WTC11 (cell line): ENCODE measurements at regions of chr1 and their contacts with region 1.

Region 1: GRCh38 chr1:28914228-28915030 is at the start of gene EPB41:
- DNase-seq: peak; percentile 97
- ATAC-seq: peak; percentile 96
- H3K4me3 Mint-ChIP-seq: peak within 1 kb of the TSS; percentile 97
- H3K27ac Mint-ChIP-seq: peak within 1 kb of the TSS; percentile 97
- H3K4me1 Mint-ChIP-seq: peaks cover 26% of the 10 kb centered on the region
- H3K27me3 Mint-ChIP-seq: no peaks in the 10 kb centered on the region
- CTCF ChIP-seq: no peak
- total RNA-seq, gene EPB41: 80.6 to 85.0 TPM (median 81.2 TPM) in 3 replicates

Region 2: GRCh38 chr1:28983509-28984310 is 69.3 kb after region 1 on chr1:
- CTCF ChIA-PET with region 1: interaction called, 17 read pairs
- POLR2A ChIA-PET with region 1: interaction called, 5 read pairs
- DNase-seq: peak; percentile 47
- ATAC-seq: peak; percentile 91
- H3K4me3 Mint-ChIP-seq: peak overlapping the region; percentile 23
- H3K27ac Mint-ChIP-seq: peak overlapping the region; percentile 91
- H3K4me1 Mint-ChIP-seq: peaks cover 39% of the 10 kb centered on the region
- H3K27me3 Mint-ChIP-seq: no peaks in the 10 kb centered on the region
- CTCF ChIP-seq: no peak

Region 3: DNA sequence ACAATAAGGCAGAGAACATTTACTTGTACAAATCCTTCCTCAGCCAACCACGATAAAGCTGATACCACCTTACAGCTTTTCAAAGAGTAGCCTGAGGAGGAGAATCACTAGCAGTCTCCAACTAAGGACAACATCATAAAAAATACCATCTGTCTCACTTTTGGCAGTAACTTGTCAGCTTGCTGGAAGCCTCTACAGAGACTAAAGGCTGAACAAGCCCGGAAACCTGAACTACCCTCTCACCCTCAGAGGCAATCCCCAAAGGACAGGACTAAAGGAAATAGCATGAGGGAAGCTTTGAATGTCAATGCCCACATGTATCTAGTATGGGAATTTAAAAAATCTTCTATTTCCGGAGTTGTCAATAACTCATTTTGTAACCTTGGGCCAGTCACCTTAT is 256.7 kb after region 1 on chr1:
- CTCF ChIA-PET with region 1: no interaction called
- POLR2A ChIA-PET with region 1: no interaction called
- DNase-seq: no peak
- ATAC-seq: no peak
- H3K4me3 Mint-ChIP-seq: no peak overlapping the region
- H3K27ac Mint-ChIP-seq: peak overlapping the region; percentile 90
- H3K4me1 Mint-ChIP-seq: peaks cover 59% of the 10 kb centered on the region
- H3K27me3 Mint-ChIP-seq: no peaks in the 10 kb centered on the region
- CTCF ChIP-seq: no peak